ENCODE measurements at regions of chr19 and their contacts with region 1.

Region 1: DNA sequence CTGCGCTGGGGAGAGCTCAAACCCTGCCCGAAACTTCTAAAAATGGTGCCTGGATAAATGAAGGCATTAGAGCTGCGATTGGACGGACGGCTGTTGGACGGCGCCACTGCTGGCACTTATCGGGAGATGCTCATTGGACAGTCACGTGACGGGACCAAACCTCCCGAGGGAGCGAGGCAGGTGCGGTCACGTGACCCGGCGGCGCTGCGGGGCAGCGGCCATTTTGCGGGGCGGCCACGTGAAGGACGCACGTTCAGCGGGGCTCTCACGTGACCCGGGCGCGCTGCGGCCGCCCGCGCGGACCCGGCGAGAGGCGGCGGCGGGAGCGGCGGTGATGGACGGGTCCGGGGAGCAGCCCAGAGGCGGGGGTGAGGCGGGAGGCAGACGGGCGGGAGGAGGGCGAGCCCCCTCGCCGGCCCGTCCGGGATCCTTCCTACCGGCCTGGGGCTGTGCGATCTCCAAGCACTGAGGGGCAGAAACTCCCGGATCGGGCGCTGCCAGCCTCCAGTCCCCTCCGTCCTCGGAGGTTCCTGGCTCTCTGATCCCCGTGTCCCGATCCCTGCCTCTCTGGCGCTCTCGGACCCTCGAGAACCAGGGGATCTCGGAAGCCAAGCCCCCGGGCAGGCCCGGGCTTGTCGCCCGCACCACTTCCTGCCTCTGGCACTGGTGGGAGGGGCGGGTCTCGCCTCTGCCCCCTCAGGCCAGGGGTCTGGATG is at the start of gene BAX:
- DNase-seq: peak; percentile 93
- ATAC-seq: peak; percentile 93
- H3K4me3 ChIP-seq: peak within 1 kb of the TSS; percentile 93
- H3K27ac ChIP-seq: peak within 1 kb of the TSS; percentile 97
- H3K4me1 ChIP-seq: peaks cover 8% of the 10 kb centered on the region
- H3K27me3 ChIP-seq: no peaks in the 10 kb centered on the region
- CTCF ChIP-seq: no peak
- POLR2A ChIP-seq: peak; percentile 73; the same call in 1 of the 2 replicates
- RAD21 ChIP-seq: no peak; the same call in 1 of the 2 replicates
- total RNA-seq, gene BAX: 23.3 and 26.1 TPM in 2 replicates

Region 2: GRCh38 chr19:48881741-48882657 is 72.8 kb before region 1 on chr19:
- CTCF ChIA-PET with region 1: no interaction called
- POLR2A ChIA-PET with region 1: interaction called, 12 read pairs
- dilution Hi-C with region 1: no loop called
- in situ Hi-C with region 1: no loop called
- intact Hi-C with region 1: no loop called
- DNase-seq: no peak
- ATAC-seq: peak; percentile 63
- H3K4me3 ChIP-seq: no peak overlapping the region
- H3K27ac ChIP-seq: no peak overlapping the region
- H3K4me1 ChIP-seq: no peaks in the 10 kb centered on the region
- H3K27me3 ChIP-seq: no peaks in the 10 kb centered on the region
- CTCF ChIP-seq: no peak
- POLR2A ChIP-seq: peak; percentile 66
- RAD21 ChIP-seq: no peak

Region 3: DNA sequence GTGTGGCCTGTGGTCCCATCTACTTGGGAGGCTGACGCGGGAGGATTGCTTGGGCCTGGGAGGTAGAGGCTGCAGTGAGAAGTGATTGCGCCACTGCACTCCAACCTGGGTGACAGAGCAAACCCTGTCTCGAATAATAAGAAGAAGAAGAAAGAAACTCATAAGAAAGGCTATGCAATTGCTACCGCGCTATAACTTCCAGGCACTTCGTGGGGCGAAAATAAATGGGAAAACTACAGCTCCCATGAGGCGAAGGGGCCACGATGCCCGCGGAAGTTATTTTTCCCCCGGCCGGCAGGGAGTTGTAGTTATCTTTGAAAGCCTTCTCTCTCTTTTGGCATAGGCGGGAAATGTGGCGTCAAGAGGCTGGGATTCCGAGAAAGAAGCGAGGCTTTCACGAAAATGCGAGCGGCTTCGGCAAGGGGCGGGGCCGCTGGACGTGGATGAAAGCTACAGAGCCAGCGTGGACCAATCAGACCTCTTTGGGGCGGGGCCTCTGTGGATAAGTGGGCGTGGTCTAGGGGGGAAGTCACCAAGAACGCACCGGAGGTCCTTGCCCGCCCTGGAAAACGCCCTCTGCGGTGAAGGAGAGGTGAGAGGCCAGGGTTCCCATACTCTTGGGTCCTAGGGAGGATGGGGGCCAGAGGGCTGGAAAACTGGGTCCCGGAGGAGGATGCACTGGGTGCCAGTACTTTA is 54.8 kb before region 1 on chr19 and contains the start of gene NUCB1:
- CTCF ChIA-PET with region 1: no interaction called
- POLR2A ChIA-PET with region 1: no interaction called
- dilution Hi-C with region 1: no loop called
- in situ Hi-C with region 1: no loop called
- intact Hi-C with region 1: loop called (anchors 2 kb)
- DNase-seq: peak; percentile 97
- ATAC-seq: peak; percentile 98
- H3K4me3 ChIP-seq: peak within 1 kb of the TSS; percentile 79
- H3K27ac ChIP-seq: peak within 1 kb of the TSS; percentile 56
- H3K4me1 ChIP-seq: peaks cover 2% of the 10 kb centered on the region; the same call in 1 of the 2 replicates
- H3K27me3 ChIP-seq: 0 out of 2 replicates have a peak, but pooled peaks cover 1% of the 10 kb centered on the region
- CTCF ChIP-seq: peak; percentile 42
- POLR2A ChIP-seq: no peak
- RAD21 ChIP-seq: peak; percentile 44
- total RNA-seq, gene NUCB1: 37.3 and 39.2 TPM in 2 replicates

Region 4: GRCh38 chr19:49084206-49085019 is 129.7 kb after region 1 on chr19:
- CTCF ChIA-PET with region 1: no interaction called
- POLR2A ChIA-PET with region 1: interaction called, 23 read pairs
- dilution Hi-C with region 1: no loop called
- in situ Hi-C with region 1: no loop called
- intact Hi-C with region 1: no loop called
- DNase-seq: no peak
- ATAC-seq: no peak
- H3K4me3 ChIP-seq: peak overlapping the region; percentile 69
- H3K27ac ChIP-seq: peak overlapping the region; percentile 66
- H3K4me1 ChIP-seq: peaks cover 6% of the 10 kb centered on the region
- H3K27me3 ChIP-seq: no peaks in the 10 kb centered on the region
- CTCF ChIP-seq: no peak
- POLR2A ChIP-seq: no peak
- RAD21 ChIP-seq: no peak

Measured in IMR-90 (cell line).